SK-N-SH (cell line): ENCODE measurements at regions of chr3 and their contacts with region 1.

Region 1: DNA sequence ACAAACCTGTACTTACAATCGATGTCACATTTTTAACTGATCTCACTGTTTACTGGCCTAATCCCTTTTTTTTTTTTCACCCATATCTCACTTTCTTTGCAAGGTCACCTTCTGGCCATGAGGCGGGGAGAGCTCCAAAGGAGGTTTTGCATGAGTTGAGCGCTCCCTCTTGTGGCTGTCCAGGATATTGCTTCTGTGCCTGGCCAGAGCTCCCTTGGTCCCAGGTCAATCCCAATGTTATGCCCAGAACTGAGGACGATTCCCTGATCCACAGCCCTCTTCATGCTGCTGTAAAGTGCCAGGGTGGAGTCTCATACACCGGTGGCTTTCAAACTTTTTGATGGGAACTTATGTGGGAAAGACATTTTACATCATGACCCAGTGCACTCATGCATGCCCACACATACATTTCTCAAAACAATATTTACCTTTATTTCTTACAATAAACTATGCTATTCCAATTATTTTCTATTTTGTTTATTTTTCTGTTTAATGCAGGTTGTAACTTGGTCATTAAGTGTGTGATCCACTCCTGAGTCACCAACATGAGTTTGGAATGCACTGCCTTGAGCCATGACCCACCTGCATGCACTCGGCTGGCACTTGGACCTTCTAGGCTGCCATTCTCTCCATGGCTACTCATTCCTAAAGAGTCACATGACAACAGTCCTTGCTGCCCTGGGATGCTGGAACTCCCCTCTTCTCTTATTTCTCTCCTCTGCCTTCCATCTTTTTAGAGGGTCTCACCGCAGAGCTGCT is 9.6 kb upstream of the SST start:
- DNase-seq: peak; percentile 65
- H3K4me3 ChIP-seq: peak overlapping the region in 1 of 2 experiments; percentile 16; a peak in 1 of 4 replicates
- H3K27ac ChIP-seq: no peak overlapping the region
- H3K4me1 ChIP-seq: no peaks in the 10 kb centered on the region
- H3K27me3 ChIP-seq: peaks cover 33% of the 10 kb centered on the region; the same call in 1 of the 2 replicates
- CTCF ChIP-seq: peak; percentile 89
- EP300 ChIP-seq: no peak
- RAD21 ChIP-seq: peak; percentile 86

Region 2: DNA sequence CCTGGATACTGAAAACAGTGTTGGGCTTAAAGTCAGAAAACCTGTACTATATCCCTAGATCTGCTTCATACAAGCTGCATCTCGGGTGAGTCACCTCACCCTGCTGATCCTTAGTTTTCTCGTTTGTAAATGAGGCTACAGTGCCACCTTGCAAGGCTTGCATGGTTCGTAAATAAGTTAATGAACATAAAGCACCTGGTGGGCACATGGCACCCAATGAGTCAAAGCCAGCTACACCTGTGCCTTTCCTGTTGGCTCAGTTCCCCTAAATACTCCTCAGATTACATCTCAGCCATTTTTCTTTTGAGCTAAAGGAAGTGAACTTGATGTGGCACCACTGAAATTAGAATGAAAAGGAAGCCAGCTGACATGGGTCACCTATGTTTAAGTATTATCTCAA is 456.0 kb before region 1 on chr3:
- CTCF ChIA-PET with region 1: interaction called, 52 read pairs
- POLR2A ChIA-PET with region 1: no interaction called
- DNase-seq: no peak
- H3K4me3 ChIP-seq: no peak overlapping the region
- H3K27ac ChIP-seq: no peak overlapping the region
- H3K4me1 ChIP-seq: no peaks in the 10 kb centered on the region
- H3K27me3 ChIP-seq: peaks cover 11% of the 10 kb centered on the region
- CTCF ChIP-seq: no peak
- EP300 ChIP-seq: no peak
- RAD21 ChIP-seq: no peak

Region 3: GRCh38 chr3:187327845-187328244 is 352.0 kb before region 1 on chr3:
- CTCF ChIA-PET with region 1: interaction called, 192 read pairs
- POLR2A ChIA-PET with region 1: no interaction called
- DNase-seq: no peak
- H3K4me3 ChIP-seq: no peak overlapping the region
- H3K27ac ChIP-seq: no peak overlapping the region
- H3K4me1 ChIP-seq: no peaks in the 10 kb centered on the region
- H3K27me3 ChIP-seq: peaks cover 4% of the 10 kb centered on the region; the same call in 1 of the 2 replicates
- CTCF ChIP-seq: no peak
- EP300 ChIP-seq: no peak
- RAD21 ChIP-seq: no peak

Region 4: DNA sequence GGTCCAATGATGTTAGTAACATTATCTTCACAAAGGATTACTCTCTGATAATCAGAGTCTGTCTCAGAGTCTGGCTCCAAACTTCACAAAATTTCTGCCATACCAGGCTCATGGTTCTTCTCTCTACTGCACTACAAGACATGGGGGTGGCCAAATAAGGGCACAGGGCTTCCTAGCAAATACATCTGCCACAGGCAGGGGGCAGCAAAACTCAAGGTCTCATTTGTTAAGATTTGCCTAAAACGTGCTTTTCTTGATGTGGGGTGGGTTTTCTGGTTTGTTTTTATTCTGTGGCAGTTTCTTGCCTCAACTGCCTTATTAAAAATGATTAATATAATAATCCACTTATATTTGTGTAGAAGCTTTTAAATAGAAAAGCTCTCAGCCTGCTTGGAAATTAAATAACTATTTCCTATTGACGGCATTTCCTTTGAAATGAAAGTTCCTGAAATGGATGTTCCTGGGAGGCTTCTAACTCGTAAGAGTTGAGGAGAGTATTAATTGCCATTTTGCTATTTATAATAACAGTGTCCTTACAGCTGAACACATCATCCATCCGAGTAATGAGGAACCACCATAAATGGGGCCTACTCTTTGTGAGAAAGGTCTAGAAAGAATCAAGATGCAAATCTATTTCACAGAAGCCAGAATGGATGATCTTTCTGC is 63.4 kb before region 1 on chr3:
- CTCF ChIA-PET with region 1: interaction called, 28 read pairs
- POLR2A ChIA-PET with region 1: no interaction called
- DNase-seq: peak; percentile 36
- H3K4me3 ChIP-seq: no peak overlapping the region; a peak in 1 of 4 replicates
- H3K27ac ChIP-seq: no peak overlapping the region
- H3K4me1 ChIP-seq: no peaks in the 10 kb centered on the region
- H3K27me3 ChIP-seq: peaks cover 3% of the 10 kb centered on the region; the same call in 1 of the 2 replicates
- CTCF ChIP-seq: peak; percentile 79
- EP300 ChIP-seq: no peak
- RAD21 ChIP-seq: peak; percentile 61

Region 5: DNA sequence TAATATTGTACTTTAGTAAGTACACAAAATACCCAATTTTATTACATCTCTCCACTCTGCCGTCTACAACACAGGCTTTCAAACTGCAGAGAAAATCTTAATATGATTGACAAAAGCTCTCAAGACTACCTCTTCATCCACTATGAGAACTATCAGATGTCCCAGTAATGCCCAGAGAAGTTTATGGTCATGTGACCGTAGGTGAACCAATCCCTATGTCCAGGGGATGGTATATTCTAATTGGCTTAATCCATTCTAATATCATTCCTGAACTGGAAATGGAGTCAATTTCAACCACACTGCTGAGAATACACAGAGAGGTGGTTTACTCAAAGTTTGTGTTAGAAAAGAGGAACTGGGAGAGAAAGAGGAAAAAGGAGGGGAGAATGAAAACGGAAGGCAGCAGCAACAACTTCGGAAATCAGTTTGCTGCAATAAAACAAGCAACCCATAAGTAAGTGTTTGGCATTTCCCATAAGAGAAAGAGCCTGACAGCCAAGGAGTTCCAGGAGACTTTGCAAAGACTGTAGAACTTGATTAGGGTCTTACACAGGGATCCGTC is 16.9 kb before region 1 on chr3:
- CTCF ChIA-PET with region 1: interaction called, 45 read pairs
- POLR2A ChIA-PET with region 1: no interaction called
- DNase-seq: no peak
- H3K4me3 ChIP-seq: no peak overlapping the region
- H3K27ac ChIP-seq: no peak overlapping the region
- H3K4me1 ChIP-seq: no peaks in the 10 kb centered on the region
- H3K27me3 ChIP-seq: no peaks in the 10 kb centered on the region
- CTCF ChIP-seq: no peak
- EP300 ChIP-seq: no peak
- RAD21 ChIP-seq: no peak

Region 6: DNA sequence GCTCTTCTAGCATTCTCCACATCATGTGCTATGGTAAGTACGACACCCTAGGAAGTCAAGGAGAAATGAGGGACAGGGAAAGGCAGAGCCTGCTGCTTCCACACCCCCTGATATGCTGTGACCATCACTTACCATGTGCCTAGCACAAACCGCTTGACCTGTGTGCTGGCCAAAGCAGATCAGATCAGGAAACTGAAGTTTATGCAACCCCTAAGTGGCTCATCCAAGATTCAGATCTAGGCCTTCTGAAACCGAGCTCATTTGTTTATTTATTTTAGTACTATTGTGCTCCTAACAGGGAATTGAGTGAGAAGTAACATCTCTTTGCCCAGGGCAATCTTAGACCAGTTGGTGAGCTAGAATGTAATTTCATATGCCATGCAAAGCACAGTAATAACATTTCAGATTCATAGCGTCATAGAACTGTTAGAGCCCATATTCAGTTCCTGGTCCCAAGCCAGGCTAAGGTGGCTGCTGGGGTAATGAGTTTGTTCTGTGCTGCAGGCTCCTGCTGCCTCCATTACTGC is 22.8 kb after region 1 on chr3 and contains the start of gene RTP2:
- CTCF ChIA-PET with region 1: interaction called, 16 read pairs
- POLR2A ChIA-PET with region 1: no interaction called
- DNase-seq: no peak
- H3K4me3 ChIP-seq: no peak within 1 kb of the TSS
- H3K27ac ChIP-seq: no peak within 1 kb of the TSS
- H3K4me1 ChIP-seq: no peaks in the 10 kb centered on the region
- H3K27me3 ChIP-seq: peaks cover 17% of the 10 kb centered on the region; the same call in 1 of the 2 replicates
- CTCF ChIP-seq: no peak
- EP300 ChIP-seq: no peak
- RAD21 ChIP-seq: no peak
- polyA plus RNA-seq, gene RTP2: 0.07 TPM in 1 of 2 replicates, not detected in the other

Region 7: GRCh38 chr3:187714404-187714979 is 34.7 kb after region 1 on chr3:
- CTCF ChIA-PET with region 1: interaction called, 15 read pairs
- POLR2A ChIA-PET with region 1: no interaction called
- DNase-seq: peak; percentile 65
- H3K4me3 ChIP-seq: peak overlapping the region in 1 of 2 experiments; percentile 2; a peak in 1 of 4 replicates
- H3K27ac ChIP-seq: no peak overlapping the region
- H3K4me1 ChIP-seq: no peaks in the 10 kb centered on the region
- H3K27me3 ChIP-seq: no peaks in the 10 kb centered on the region; the same call in 1 of the 2 replicates
- CTCF ChIP-seq: peak; percentile 91
- EP300 ChIP-seq: no peak
- RAD21 ChIP-seq: peak; percentile 88